Activated CD4-positive, alpha-beta memory T cell treated with anti-CD3 and anti-CD28 coated beads for 36 hours (primary cell): ENCODE measurements at regions of chrX and their contacts with region 1.

Region 1: DNA sequence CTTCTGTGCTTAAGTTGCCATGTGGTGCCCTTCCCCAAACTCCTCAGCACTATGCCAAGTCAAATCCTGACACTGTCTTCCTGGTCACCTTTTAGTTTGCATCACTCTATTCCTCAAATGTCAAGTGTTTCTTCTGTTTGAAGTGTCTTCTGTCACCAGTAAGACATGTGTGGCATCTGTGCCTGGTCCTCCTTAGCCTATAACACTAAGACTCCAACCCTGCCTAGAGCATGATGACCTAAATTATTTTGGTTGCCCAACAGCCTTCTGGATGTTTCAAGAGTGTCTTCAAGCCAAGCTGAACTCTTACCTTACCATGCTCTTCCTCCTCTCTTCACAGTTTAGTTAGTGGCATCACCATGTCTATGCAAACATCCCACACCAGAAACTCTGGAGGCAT is 44.9 kb downstream of the INTS6L start:
- DNase-seq: no peak
- H3K4me3 Mint-ChIP-seq: no peak overlapping the region
- H3K27ac Mint-ChIP-seq: no peak overlapping the region
- H3K4me1 Mint-ChIP-seq: no peaks in the 10 kb centered on the region
- H3K27me3 Mint-ChIP-seq: no peaks in the 10 kb centered on the region

Region 2: DNA sequence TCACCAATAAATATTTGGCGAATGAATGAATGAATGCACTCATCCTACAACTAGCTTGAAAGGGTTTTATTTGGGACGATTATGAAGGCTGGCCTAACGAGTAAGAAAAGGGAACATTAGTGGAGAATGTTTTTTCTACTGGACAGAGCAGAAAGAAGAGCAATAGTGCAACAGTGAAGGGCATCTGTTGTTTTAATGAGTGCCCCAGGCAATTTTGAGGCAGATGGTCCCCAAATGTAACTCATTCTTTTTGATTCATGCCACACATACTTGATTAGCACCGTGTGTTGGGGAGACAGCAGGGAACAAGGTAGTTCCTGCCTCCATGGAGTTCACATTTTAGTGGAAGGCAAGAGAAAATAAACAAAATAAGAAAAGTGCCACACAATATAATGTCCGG is 67.7 kb before region 1 on chrX:
- CTCF ChIA-PET with region 1: no interaction called
- POLR2A ChIA-PET with region 1: no interaction called
- intact Hi-C with region 1: no loop called
- DNase-seq: no peak
- H3K4me3 Mint-ChIP-seq: no peak overlapping the region
- H3K27ac Mint-ChIP-seq: no peak overlapping the region
- H3K4me1 Mint-ChIP-seq: peaks cover 8% of the 10 kb centered on the region
- H3K27me3 Mint-ChIP-seq: no peaks in the 10 kb centered on the region

Region 3: GRCh38 chrX:135543924-135544323 is 21.5 kb before region 1 on chrX:
- CTCF ChIA-PET with region 1: interaction called, 3 read pairs
- POLR2A ChIA-PET with region 1: no interaction called
- intact Hi-C with region 1: loop called (anchors 1 kb)
- DNase-seq: peak; percentile 35
- H3K4me3 Mint-ChIP-seq: no peak overlapping the region
- H3K27ac Mint-ChIP-seq: no peak overlapping the region
- H3K4me1 Mint-ChIP-seq: peaks cover 26% of the 10 kb centered on the region
- H3K27me3 Mint-ChIP-seq: no peaks in the 10 kb centered on the region

Region 4: GRCh38 chrX:135581496-135581895 is 16.1 kb after region 1 on chrX:
- CTCF ChIA-PET with region 1: no interaction called
- POLR2A ChIA-PET with region 1: no interaction called
- intact Hi-C with region 1: no loop called
- DNase-seq: no peak
- H3K4me3 Mint-ChIP-seq: no peak overlapping the region
- H3K27ac Mint-ChIP-seq: no peak overlapping the region
- H3K4me1 Mint-ChIP-seq: no peaks in the 10 kb centered on the region
- H3K27me3 Mint-ChIP-seq: no peaks in the 10 kb centered on the region